ENCODE measurements at regions of chr6 and their contacts with region 1.

Region 1: GRCh38 chr6:72787391-72788031 is 165.6 kb downstream of the KCNQ5 start:
- DNase-seq: peak; percentile 65 to 79
- ATAC-seq: peak; percentile 98 to 99
- H3K4me3 ChIP-seq: no peak overlapping the region
- H3K27ac ChIP-seq: peak overlapping the region; percentile 54 to 74 (median 62)
- H3K4me1 ChIP-seq: peaks cover 15 to 25% of the 10 kb centered on the region in 2 donors
- H3K27me3 ChIP-seq: no peaks in the 10 kb centered on the region
- CTCF ChIP-seq: no peak
- POLR2A ChIP-seq: no peak

Region 2: GRCh38 chr6:72446430-72446829 is 341.1 kb before region 1 on chr6:
- in situ Hi-C with region 1: no loop called
- intact Hi-C with region 1: no loop called
- DNase-seq: no peak
- ATAC-seq: no peak
- H3K4me3 ChIP-seq: no peak overlapping the region
- H3K27ac ChIP-seq: no peak overlapping the region
- H3K4me1 ChIP-seq: no peaks in the 10 kb centered on the region
- H3K27me3 ChIP-seq: no peaks in the 10 kb centered on the region
- CTCF ChIP-seq: no peak
- POLR2A ChIP-seq: no peak

Region 3: DNA sequence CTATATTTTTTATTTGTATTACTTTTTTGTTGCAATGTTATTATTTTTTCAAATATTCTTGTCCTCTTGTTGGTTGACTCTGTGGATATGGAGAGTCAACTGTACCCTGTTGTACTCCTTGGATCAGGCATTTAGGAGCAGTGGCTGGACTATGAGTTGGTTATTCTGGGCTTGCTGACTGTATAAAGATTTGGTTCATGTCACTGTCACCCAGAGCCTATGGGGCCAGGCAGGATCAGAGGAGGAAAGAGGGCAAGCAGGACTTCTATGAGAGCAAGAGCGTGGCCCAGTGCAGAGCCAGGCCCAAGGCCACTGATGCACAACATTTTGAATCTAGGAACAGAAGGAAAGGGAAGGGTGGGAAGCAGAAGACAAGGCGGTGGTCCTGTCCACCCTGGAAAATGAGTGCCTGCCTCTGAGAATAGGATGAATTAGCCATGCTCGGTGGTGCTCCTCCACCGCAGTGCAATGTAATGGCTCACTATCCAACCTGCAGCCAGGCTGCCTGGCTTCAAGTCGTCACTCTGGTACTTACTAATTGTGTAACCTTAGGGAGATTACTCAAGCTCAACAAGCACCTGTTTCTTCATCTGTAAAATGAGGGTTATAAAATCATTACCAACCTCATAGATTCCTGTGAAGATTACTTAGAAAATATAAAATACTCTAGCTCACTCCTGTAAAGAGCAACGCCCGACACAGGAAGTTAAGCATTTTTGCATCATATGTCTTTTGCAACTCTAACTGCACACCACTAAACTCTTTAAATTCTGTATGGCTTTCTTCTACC is 26.5 kb after region 1 on chr6:
- in situ Hi-C with region 1: no loop called
- intact Hi-C with region 1: loop called (anchors 2 kb)
- DNase-seq: peak; percentile 17 to 73
- ATAC-seq: peak; percentile 86 to 93
- H3K4me3 ChIP-seq: no peak overlapping the region
- H3K27ac ChIP-seq: peak overlapping the region; percentile 43 to 69 (median 54)
- H3K4me1 ChIP-seq: peaks cover 38 to 48% of the 10 kb centered on the region in 2 donors
- H3K27me3 ChIP-seq: no peaks in the 10 kb centered on the region
- CTCF ChIP-seq: no peak
- POLR2A ChIP-seq: no peak

Region 4: DNA sequence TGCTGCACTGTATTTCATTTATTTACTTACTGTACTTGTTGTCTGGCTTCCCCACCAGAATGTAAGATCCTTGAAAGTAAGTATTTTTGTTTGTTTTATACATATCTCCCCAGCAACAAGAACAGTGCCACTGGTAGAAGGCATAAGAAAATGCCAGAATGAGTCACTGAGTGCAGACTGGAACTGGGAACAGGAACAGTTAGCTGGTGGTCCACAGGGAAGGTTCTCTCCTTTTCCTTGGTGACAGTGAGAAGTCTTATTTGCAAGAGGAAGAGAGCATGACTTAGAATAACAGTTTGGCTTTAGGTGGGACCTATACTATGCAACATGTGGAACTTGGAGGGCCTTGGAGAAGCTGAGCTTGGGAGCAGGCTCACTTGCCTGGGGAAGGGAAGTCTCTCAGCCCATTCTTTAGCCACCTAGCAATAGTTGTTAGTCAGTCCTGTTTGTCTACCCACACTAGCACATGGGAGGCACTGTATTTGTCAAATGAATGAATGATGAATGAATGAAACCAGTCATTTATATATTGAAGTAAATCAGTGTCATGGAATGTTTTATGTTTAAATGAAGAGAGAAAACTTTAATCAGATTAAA is 37.9 kb after region 1 on chr6:
- in situ Hi-C with region 1: no loop called
- intact Hi-C with region 1: no loop called
- DNase-seq: no peak
- ATAC-seq: peak in 1 of 2 donors; percentile 53
- H3K4me3 ChIP-seq: no peak overlapping the region
- H3K27ac ChIP-seq: peak overlapping the region in 2 of 4 donors; percentile 8 to 39
- H3K4me1 ChIP-seq: peaks cover 59 to 62% of the 10 kb centered on the region in 2 donors
- H3K27me3 ChIP-seq: no peaks in the 10 kb centered on the region
- CTCF ChIP-seq: no peak
- POLR2A ChIP-seq: no peak

Measured in gastrocnemius medialis (tissue), 4 donors.